Gastrocnemius medialis (tissue), 4 donors: ENCODE measurements at regions of chr9 and their contacts with region 1.

Region 1: DNA sequence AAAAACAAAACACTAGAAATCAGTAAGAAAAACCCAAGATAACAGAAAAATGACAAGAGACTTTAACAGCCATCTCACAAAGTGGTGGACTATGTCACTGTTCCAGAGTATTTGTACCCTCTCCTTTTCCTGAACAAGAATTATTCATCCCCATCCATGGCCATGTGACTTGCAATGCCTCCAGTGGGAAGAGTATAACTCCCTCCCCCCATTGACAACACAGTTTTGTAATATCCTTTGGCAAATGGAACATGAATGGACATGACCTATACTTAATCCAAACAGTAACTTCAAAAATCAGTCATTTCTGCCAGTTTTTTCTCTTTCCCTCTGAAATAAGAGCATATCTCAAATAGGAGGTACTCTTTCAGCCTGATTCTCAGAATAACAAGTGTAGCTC is 33.9 kb downstream of the PTBP3 start:
- DNase-seq: no peak
- ATAC-seq: peak in 1 of 2 donors; percentile 30
- H3K4me3 ChIP-seq: no peak overlapping the region
- H3K27ac ChIP-seq: no peak overlapping the region
- H3K4me1 ChIP-seq: peaks cover 0 to 4% of the 10 kb centered on the region in 2 donors
- H3K27me3 ChIP-seq: no peaks in the 10 kb centered on the region
- CTCF ChIP-seq: no peak
- POLR2A ChIP-seq: no peak

Region 2: GRCh38 chr9:112212926-112213325 is 86.6 kb before region 1 on chr9:
- in situ Hi-C with region 1: no loop called
- intact Hi-C with region 1: no loop called
- DNase-seq: no peak
- ATAC-seq: no peak
- H3K4me3 ChIP-seq: no peak overlapping the region
- H3K27ac ChIP-seq: no peak overlapping the region
- H3K4me1 ChIP-seq: no peaks in the 10 kb centered on the region
- H3K27me3 ChIP-seq: no peaks in the 10 kb centered on the region
- CTCF ChIP-seq: no peak
- POLR2A ChIP-seq: no peak

Region 3: DNA sequence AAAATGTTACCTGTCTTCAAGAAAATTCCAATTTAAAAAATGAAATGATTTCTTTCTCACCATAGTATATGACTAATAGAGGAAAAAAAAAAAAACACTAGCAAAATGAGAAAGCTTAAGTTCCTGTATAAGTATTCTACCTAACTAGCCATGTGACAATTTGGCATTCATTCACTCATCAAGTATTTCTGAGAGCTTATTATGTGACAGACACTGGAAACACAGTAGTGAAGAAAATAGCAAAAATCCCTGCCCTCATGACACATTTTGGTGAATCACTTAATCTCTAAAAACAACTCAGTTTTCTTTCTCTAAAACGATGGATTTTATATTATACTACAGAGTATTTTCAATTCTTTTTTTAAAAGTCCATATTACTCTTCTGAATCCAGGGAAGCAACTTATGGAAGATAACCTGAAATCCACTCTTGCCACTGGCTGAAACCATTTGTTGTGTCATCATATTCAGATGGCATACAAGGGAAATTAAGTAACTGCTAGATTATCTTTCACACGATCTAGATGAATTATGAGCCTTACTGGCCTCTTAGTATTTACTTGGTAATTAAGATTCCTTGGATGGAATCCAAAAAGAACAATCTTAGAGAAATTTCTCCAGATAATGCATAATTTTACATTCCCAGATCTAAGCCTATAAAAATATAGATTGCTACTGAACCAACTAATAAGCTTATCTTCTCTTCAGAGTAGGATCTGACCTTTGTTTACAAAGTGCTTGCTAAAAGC is 28.4 kb after region 1 on chr9:
- in situ Hi-C with region 1: no loop called
- intact Hi-C with region 1: loop called (anchors 5 kb)
- DNase-seq: no peak
- ATAC-seq: no peak
- H3K4me3 ChIP-seq: no peak overlapping the region
- H3K27ac ChIP-seq: no peak overlapping the region
- H3K4me1 ChIP-seq: peaks cover 16 to 21% of the 10 kb centered on the region in 2 donors
- H3K27me3 ChIP-seq: no peaks in the 10 kb centered on the region
- CTCF ChIP-seq: no peak
- POLR2A ChIP-seq: no peak